Heart left ventricle (tissue), 16 donors: ENCODE measurements at regions of chr7 and their contacts with region 1.

Region 1: GRCh38 chr7:113015032-113015645 is 71.5 kb downstream of the GPR85 start:
- DNase-seq: no peak
- ATAC-seq: no peak
- H3K4me3 ChIP-seq: no peak overlapping the region
- H3K27ac ChIP-seq: no peak overlapping the region
- H3K4me1 ChIP-seq: peaks cover 0 to 3% (median 0%) of the 10 kb centered on the region in 12 donors
- H3K27me3 ChIP-seq: no peaks in the 10 kb centered on the region
- CTCF ChIP-seq: peak in 11 of 12 donors; percentile 21 to 61 (median 46)
- POLR2A ChIP-seq: no peak

Region 2: DNA sequence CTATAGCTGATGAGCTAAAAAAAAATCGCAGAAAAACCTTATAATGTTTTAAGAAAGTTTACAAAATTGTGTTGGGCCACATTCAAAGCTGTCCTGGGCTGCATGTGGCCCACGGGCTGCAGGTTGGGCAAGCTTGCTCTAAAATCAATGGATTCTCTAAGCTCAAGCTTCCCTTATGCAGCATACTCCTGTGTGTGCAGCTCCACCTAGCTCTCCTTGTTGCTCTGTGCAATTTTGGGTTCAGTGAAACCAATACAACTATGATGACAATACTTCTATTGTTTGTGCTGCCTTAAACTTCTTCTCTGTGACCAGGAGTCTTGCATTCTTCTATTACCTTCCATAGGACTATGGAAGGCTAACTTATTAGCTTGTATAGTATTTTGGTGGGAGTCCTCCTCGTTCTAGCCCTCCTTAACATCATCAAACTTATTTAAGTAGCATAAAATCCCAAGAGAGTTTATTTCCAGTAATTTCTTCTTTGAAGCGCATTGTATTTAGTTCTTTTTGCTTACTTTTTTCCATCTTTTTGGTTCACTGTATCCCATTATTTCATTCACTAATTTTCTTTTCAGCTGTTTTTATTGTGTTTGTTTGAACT is 274.1 kb after region 1 on chr7:
- intact Hi-C with region 1: loop called in 4 of 10 experiments (anchors 5 to 10 kb)
- DNase-seq: peak in 2 of 5 donors; percentile 22 to 28
- ATAC-seq: peak in 3 of 4 donors; percentile 65 to 79 (median 77)
- H3K4me3 ChIP-seq: no peak overlapping the region
- H3K27ac ChIP-seq: no peak overlapping the region
- H3K4me1 ChIP-seq: no peaks in the 10 kb centered on the region
- H3K27me3 ChIP-seq: no peaks in the 10 kb centered on the region
- CTCF ChIP-seq: peak in 11 of 12 donors; percentile 9 to 56 (median 34)
- POLR2A ChIP-seq: no peak

Region 3: DNA sequence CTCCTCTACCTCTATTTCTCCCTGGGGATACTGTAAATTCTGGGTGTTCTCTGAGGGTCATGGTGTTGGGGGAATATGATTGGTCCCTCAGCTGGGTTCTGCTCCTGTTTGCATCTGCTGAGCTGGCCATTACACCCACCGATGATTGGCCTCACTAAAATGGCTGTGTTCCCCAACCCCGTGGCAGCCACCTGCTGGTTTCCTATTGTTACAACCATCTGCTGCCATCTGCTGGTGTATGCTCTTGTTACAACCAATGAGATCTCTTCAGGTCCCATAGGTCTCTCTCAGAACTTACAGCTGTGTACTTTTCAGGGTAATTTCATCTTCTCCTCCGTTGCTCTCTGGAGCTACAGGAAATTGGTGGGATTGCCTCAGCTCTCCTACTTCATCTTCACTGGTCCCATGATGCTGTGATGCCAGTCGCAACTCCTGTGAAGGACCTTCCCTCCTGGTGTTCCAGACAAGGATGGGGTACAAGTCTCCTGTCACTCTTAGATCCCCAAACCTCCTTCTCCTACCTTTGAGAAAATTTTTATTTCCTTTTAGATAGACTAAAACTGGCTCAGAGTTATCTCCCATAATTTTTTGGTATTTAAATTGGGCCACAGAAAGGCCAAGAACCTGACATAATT is 406.7 kb after region 1 on chr7:
- intact Hi-C with region 1: loop called in 7 of 10 experiments (anchors 2 to 10 kb)
- DNase-seq: peak; percentile 67 to 84 (median 67)
- ATAC-seq: peak; percentile 81 to 94 (median 86)
- H3K4me3 ChIP-seq: no peak overlapping the region
- H3K27ac ChIP-seq: no peak overlapping the region
- H3K4me1 ChIP-seq: peaks cover 0 to 2% (median 0%) of the 10 kb centered on the region in 12 donors
- H3K27me3 ChIP-seq: no peaks in the 10 kb centered on the region
- CTCF ChIP-seq: peak; percentile 55 to 83 (median 74)
- POLR2A ChIP-seq: no peak

Region 4: DNA sequence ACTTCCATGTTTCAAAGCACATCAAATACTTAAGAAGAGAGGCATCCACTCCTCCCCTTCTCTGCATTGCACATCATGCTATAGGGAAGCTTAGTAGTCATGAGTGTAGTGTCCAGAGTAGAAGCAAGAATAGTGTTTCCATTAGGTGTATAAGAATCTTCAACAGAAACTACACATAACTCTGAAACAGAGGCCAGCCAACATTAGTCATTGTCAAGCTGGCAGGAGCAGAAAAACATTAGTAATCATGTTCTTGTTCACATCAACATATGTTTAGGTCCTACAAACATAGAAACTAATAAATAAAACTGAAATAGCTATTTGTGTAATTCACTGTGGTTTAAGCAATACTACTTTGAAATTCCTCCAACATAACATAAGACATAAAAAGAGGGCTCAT is 533.4 kb after region 1 on chr7:
- intact Hi-C with region 1: no loop called
- DNase-seq: no peak
- ATAC-seq: no peak
- H3K4me3 ChIP-seq: no peak overlapping the region
- H3K27ac ChIP-seq: no peak overlapping the region
- H3K4me1 ChIP-seq: no peaks in the 10 kb centered on the region
- H3K27me3 ChIP-seq: no peaks in the 10 kb centered on the region
- CTCF ChIP-seq: no peak
- POLR2A ChIP-seq: no peak

Region 5: GRCh38 chr7:113698556-113699220 is 683.5 kb after region 1 on chr7:
- intact Hi-C with region 1: loop called in 3 of 10 experiments (anchors 10 kb)
- DNase-seq: no peak
- ATAC-seq: no peak
- H3K4me3 ChIP-seq: no peak overlapping the region
- H3K27ac ChIP-seq: no peak overlapping the region
- H3K4me1 ChIP-seq: no peaks in the 10 kb centered on the region
- H3K27me3 ChIP-seq: no peaks in the 10 kb centered on the region
- CTCF ChIP-seq: peak; percentile 45 to 71 (median 62)
- POLR2A ChIP-seq: no peak

Region 6: DNA sequence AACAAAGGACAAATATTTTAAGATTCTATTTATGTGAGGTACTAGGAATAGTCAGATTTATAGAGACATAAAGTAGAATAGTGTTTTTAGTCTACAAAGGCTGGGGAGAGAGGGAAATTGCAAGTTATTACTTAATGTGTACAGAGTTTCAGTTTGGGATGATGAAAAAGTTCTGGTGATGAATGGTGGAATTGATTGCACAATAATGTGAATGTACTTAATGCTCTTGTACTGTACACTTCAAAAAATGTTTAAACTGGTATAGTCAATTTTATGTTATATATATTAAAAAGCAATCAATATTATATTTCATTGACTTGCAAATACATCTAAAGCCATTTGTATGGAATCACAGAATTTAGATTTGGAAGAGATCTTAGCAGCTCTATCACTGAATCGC is 690.3 kb after region 1 on chr7:
- intact Hi-C with region 1: loop called in 2 of 10 experiments (anchors 10 kb)
- DNase-seq: no peak
- ATAC-seq: no peak
- H3K4me3 ChIP-seq: no peak overlapping the region
- H3K27ac ChIP-seq: no peak overlapping the region
- H3K4me1 ChIP-seq: no peaks in the 10 kb centered on the region
- H3K27me3 ChIP-seq: no peaks in the 10 kb centered on the region
- CTCF ChIP-seq: no peak
- POLR2A ChIP-seq: no peak